ENCODE measurements at regions of chr18 and their contacts with region 1.

Region 1: GRCh38 chr18:68459968-68460367 is 254.9 kb downstream of the TMX3 start:
- DNase-seq: no peak
- H3K4me3 ChIP-seq: no peak overlapping the region
- H3K27ac ChIP-seq: no peak overlapping the region
- H3K4me1 ChIP-seq: peaks cover 11% of the 10 kb centered on the region
- H3K27me3 ChIP-seq: no peaks in the 10 kb centered on the region
- CTCF ChIP-seq: no peak

Region 2: GRCh38 chr18:68354176-68354575 is 105.8 kb before region 1 on chr18:
- CTCF ChIA-PET with region 1: interaction called, 16 read pairs
- POLR2A ChIA-PET with region 1: no interaction called
- intact Hi-C with region 1: no loop called
- DNase-seq: no peak
- H3K4me3 ChIP-seq: no peak overlapping the region
- H3K27ac ChIP-seq: no peak overlapping the region
- H3K4me1 ChIP-seq: no peaks in the 10 kb centered on the region
- H3K27me3 ChIP-seq: no peaks in the 10 kb centered on the region
- CTCF ChIP-seq: no peak